Activated CD4-positive, alpha-beta memory T cell treated with anti-CD3 and anti-CD28 coated beads, Interleukin-2, amount 10 ng/mL, durations not matched to agents 7 days and 5 days (primary cell): ENCODE measurements at regions of chr19 and their contacts with region 1.

Region 1: GRCh38 chr19:41353466-41354342 is at the start of gene TGFB1:
- DNase-seq: peak; percentile 93
- H3K4me3 Mint-ChIP-seq: peak within 1 kb of the TSS; percentile 97
- H3K27ac Mint-ChIP-seq: peak within 1 kb of the TSS; percentile 90
- H3K4me1 Mint-ChIP-seq: peaks cover 64% of the 10 kb centered on the region
- H3K27me3 Mint-ChIP-seq: no peaks in the 10 kb centered on the region
- total RNA-seq, gene TGFB1: 236 to 247 TPM

Region 2: DNA sequence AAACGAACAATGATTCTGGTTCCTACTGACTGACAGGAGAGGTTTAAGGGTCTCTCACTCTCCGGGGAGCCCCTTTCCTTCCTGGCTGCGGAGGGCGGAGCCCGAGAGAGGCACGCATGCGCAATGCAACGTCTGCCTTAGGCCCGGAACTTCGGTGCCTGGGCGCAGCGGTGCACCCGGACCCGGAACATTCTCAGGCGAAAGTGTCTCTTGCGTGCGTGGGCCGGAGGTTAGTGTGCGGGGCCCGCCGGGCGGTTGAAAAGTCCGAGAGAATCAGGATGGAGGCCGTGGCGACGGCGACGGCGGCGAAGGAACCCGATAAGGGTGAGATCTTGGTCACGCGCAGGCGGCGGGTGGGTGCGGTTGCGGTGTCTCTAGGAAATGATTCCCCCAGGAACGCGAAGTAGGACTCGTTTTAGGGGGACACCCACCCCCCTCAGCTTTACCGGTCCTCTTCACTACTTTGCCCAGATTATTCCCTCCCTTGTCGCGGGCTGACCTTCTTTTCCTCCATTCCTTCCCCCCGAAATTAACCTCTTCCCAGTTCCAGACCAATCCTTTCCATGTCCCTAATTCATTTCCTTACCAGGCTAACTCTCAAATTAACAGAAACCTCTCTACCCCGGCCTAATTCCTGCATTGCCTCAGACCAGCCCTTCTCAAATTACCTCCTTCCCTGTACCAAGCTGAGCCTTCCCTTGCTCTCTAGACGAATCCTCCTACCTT is 43.5 kb before region 1 on chr19 and contains the start of gene CCDC97:
- CTCF ChIA-PET with region 1: interaction called, 13 read pairs
- POLR2A ChIA-PET with region 1: interaction called, 173 read pairs
- DNase-seq: peak; percentile 90
- H3K4me3 Mint-ChIP-seq: peak within 1 kb of the TSS; percentile 98
- H3K27ac Mint-ChIP-seq: peak within 1 kb of the TSS; percentile 98
- H3K4me1 Mint-ChIP-seq: peaks cover 79% of the 10 kb centered on the region
- H3K27me3 Mint-ChIP-seq: no peaks in the 10 kb centered on the region
- total RNA-seq, gene CCDC97: 43.0 to 43.4 TPM

Region 3: GRCh38 chr19:41321600-41322270 is 32.0 kb before region 1 on chr19:
- CTCF ChIA-PET with region 1: interaction called, 27 read pairs
- POLR2A ChIA-PET with region 1: interaction called, 65 read pairs
- DNase-seq: no peak
- H3K4me3 Mint-ChIP-seq: no peak overlapping the region
- H3K27ac Mint-ChIP-seq: peak overlapping the region; percentile 26
- H3K4me1 Mint-ChIP-seq: peaks cover 40% of the 10 kb centered on the region
- H3K27me3 Mint-ChIP-seq: no peaks in the 10 kb centered on the region

Region 4: GRCh38 chr19:41327576-41328156 is 26.0 kb before region 1 on chr19:
- CTCF ChIA-PET with region 1: interaction called, 27 read pairs
- POLR2A ChIA-PET with region 1: interaction called, 65 read pairs
- DNase-seq: peak; percentile 89
- H3K4me3 Mint-ChIP-seq: peak overlapping the region; percentile 68
- H3K27ac Mint-ChIP-seq: peak overlapping the region; percentile 95
- H3K4me1 Mint-ChIP-seq: peaks cover 73% of the 10 kb centered on the region
- H3K27me3 Mint-ChIP-seq: no peaks in the 10 kb centered on the region

Region 5: GRCh38 chr19:41334793-41335192 is 18.9 kb before region 1 on chr19:
- CTCF ChIA-PET with region 1: interaction called, 4 read pairs
- POLR2A ChIA-PET with region 1: interaction called, 15 read pairs
- DNase-seq: no peak
- H3K4me3 Mint-ChIP-seq: no peak overlapping the region
- H3K27ac Mint-ChIP-seq: peak overlapping the region; percentile 36
- H3K4me1 Mint-ChIP-seq: peaks cover 55% of the 10 kb centered on the region
- H3K27me3 Mint-ChIP-seq: no peaks in the 10 kb centered on the region

Region 6: GRCh38 chr19:41363753-41364523 is 10.2 kb after region 1 on chr19 and contains the start of gene B9D2:
- CTCF ChIA-PET with region 1: interaction called, 81 read pairs
- POLR2A ChIA-PET with region 1: interaction called, 82 read pairs
- DNase-seq: peak; percentile 98
- H3K4me3 Mint-ChIP-seq: peak within 1 kb of the TSS; percentile 87
- H3K27ac Mint-ChIP-seq: peak within 1 kb of the TSS; percentile 93
- H3K4me1 Mint-ChIP-seq: peaks cover 40% of the 10 kb centered on the region
- H3K27me3 Mint-ChIP-seq: no peaks in the 10 kb centered on the region
- total RNA-seq, gene B9D2: 10.8 to 11.2 TPM